Endothelial cell of umbilical vein (primary cell): ENCODE measurements at regions of chr19 and their contacts with region 1.

Region 1: GRCh38 chr19:19488875-19489690 is 26.3 kb downstream of the TSSK6 start:
- DNase-seq: peak; percentile 86
- H3K4me3 ChIP-seq: no peak overlapping the region
- H3K27ac ChIP-seq: peak overlapping the region; percentile 76
- H3K4me1 ChIP-seq: peaks cover 29% of the 10 kb centered on the region
- H3K27me3 ChIP-seq: no peaks in the 10 kb centered on the region
- CTCF ChIP-seq: no peak
- POLR2A ChIP-seq: no peak

Region 2: DNA sequence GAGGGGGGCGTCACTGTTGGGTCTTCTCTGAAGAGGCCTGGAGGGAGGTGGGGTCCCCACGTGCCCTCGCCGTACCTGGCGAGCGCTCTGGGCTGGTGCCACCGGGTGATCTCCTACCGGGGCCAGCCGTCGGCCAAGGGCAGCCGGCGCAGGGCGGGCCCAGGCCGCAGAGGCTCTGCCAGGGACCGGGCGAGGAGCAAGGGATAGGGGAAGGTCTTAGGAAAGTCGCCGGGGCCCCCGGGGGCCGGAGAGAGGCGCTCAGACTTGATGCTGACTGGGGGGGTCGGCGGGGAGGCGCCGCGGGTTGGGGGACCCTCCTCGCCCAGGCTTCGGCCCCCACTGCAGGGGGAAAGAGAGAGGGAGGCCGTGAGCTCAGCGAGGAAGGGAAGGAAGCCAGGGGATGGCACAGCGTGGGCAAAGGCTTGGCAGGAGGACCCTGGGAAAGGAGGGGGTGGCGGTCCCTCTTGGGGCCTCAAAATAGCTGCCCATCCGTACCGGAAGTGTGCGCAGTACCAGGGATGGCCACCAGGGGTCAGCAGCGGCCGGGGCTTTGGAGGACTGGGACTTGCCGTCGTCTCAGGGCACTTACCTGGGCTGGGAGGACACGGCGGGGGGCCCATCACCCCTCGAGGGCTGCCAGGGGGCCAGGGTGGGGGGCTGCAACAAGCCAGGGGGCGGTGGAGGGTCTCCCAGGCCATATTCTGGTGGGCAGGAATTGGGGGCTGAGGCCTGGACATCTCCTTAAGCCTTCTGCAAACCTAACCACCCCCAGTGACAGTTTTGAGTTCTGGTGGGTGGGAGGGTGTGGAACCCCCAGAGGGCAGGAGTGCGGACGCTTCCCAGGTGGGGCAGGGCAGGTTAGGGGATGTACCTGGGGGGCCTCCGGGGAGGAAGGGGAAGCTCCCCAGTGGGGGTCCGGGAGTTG is 343.1 kb before region 1 on chr19:
- CTCF ChIA-PET with region 1: interaction called, 4 read pairs
- POLR2A ChIA-PET with region 1: no interaction called
- dilution Hi-C with region 1: no loop called
- intact Hi-C with region 1: loop called (anchors 1 kb)
- DNase-seq: peak; percentile 59
- H3K4me3 ChIP-seq: no peak overlapping the region
- H3K27ac ChIP-seq: no peak overlapping the region
- H3K4me1 ChIP-seq: no peaks in the 10 kb centered on the region
- H3K27me3 ChIP-seq: no peaks in the 10 kb centered on the region
- CTCF ChIP-seq: peak; percentile 80 to 97
- POLR2A ChIP-seq: no peak

Region 3: DNA sequence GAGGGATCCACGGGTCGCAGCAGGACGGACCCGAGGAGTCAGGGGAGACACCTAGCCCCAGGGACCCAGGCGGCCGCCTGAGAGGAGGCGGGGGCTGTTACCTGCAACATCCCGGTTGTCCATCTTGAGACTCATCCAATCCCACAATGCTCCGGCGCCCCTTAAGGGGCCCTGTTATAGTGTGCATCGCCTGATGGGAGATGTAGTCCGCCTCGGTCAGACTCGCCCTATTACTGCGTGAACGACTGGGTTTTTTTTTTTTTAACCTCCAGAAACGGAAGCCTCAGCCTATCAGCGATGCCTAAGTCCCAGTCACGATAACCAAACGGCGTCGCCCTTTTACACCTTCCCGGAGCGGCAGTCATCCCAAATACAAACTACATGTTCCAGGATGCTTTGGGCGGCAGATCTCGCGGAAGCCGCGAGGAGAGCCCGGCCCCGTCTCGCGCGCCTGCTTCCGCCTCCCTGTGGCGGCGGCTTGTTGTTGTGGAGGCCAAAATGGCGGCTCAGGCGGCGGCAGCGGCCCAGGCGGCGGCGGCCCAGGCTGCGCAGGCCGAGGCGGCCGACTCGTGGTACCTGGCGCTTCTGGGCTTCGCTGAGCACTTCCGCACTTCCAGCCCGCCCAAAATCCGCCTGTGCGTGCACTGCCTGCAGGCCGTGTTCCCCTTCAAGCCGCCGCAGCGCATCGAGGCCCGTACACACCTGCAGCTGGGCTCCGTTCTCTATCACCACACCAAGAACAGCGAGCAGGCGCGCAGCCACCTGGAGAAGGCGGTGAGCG is 168.5 kb before region 1 on chr19 and contains the starts of genes MAU2 and SUGP1:
- CTCF ChIA-PET with region 1: interaction called, 4 read pairs
- POLR2A ChIA-PET with region 1: no interaction called
- dilution Hi-C with region 1: no loop called
- intact Hi-C with region 1: loop called (anchors 1 kb)
- DNase-seq: peak; percentile 89
- H3K4me3 ChIP-seq: peak within 1 kb of the TSS; percentile 69 to 90 (median 83)
- H3K27ac ChIP-seq: peak within 1 kb of the TSS; percentile 94
- H3K4me1 ChIP-seq: peaks cover 13% of the 10 kb centered on the region
- H3K27me3 ChIP-seq: no peaks in the 10 kb centered on the region
- CTCF ChIP-seq: no peak
- POLR2A ChIP-seq: peak; percentile 78
- total RNA-seq, gene MAU2: 57.3 and 70.0 TPM in 2 replicates
- total RNA-seq, gene SUGP1: 59.9 and 64.7 TPM in 2 replicates

Region 4: GRCh38 chr19:19361075-19361594 is 127.9 kb before region 1 on chr19:
- CTCF ChIA-PET with region 1: interaction called, 127 read pairs
- POLR2A ChIA-PET with region 1: no interaction called
- dilution Hi-C with region 1: no loop called
- intact Hi-C with region 1: loop called (anchors 1 kb)
- DNase-seq: peak; percentile 85
- H3K4me3 ChIP-seq: no peak overlapping the region
- H3K27ac ChIP-seq: no peak overlapping the region
- H3K4me1 ChIP-seq: peaks cover 8% of the 10 kb centered on the region
- H3K27me3 ChIP-seq: no peaks in the 10 kb centered on the region
- CTCF ChIP-seq: peak; percentile 76 to 77
- POLR2A ChIP-seq: no peak

Region 5: DNA sequence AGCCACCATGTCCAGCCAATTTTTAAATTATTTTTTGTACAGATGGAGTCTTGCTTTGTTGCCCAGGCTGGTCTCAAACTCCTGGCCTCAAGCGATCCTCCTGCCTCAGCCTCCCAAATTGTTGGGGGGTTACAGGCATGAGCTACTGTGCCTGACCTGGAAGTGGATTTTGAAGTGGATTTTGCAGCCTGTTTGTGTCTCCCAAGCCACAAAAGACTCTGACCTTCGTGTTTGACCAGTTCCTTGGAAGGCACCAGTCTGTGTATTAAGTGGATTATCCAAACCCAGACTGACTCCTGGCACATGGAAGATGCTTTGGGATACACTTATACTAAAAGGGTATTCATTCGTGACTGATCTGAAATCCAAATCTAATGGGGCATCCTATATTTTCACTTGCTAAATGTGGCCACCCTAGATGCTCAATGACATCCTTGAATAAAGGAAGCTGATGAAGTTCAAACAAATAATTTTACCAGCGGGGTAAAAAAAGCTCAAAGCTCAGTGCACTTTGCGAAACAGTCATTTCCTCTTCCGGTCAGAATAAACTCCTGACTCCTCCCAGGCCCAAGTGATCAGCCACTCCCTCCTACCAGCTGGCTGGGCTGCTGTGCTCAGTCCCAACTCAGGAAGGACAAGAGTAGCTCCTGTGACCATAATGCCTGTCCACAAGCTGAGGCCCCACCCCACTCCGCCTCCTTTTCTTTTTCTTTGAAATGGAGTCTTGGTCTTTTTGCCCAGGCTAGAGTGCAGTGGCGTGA is 116.2 kb before region 1 on chr19:
- CTCF ChIA-PET with region 1: interaction called, 127 read pairs
- POLR2A ChIA-PET with region 1: no interaction called
- dilution Hi-C with region 1: no loop called
- intact Hi-C with region 1: no loop called
- DNase-seq: peak; percentile 80
- H3K4me3 ChIP-seq: no peak overlapping the region
- H3K27ac ChIP-seq: peak overlapping the region; percentile 66
- H3K4me1 ChIP-seq: peaks cover 11% of the 10 kb centered on the region
- H3K27me3 ChIP-seq: no peaks in the 10 kb centered on the region
- CTCF ChIP-seq: no peak
- POLR2A ChIP-seq: peak; percentile 51

Region 6: GRCh38 chr19:19404879-19405860 is 83.9 kb before region 1 on chr19 and contains the start of gene GATAD2A:
- CTCF ChIA-PET with region 1: interaction called, 39 read pairs
- POLR2A ChIA-PET with region 1: interaction called, 5 read pairs
- dilution Hi-C with region 1: no loop called
- intact Hi-C with region 1: loop called (anchors 1 kb)
- DNase-seq: peak; percentile 88
- H3K4me3 ChIP-seq: peak within 1 kb of the TSS; percentile 79 to 85 (median 84)
- H3K27ac ChIP-seq: peak within 1 kb of the TSS; percentile 63
- H3K4me1 ChIP-seq: peaks cover 11% of the 10 kb centered on the region
- H3K27me3 ChIP-seq: no peaks in the 10 kb centered on the region
- CTCF ChIP-seq: peak; percentile 17 to 20
- POLR2A ChIP-seq: peak; percentile 51
- total RNA-seq, gene GATAD2A: 134 and 138 TPM in 2 replicates